Sigmoid colon (tissue), 7 donors: ENCODE measurements at regions of chr3 and their contacts with region 1.

Region 1: GRCh38 chr3:49428697-49429100 is 425 bp downstream of the NICN1 start:
- DNase-seq: no peak
- H3K4me3 ChIP-seq: peak overlapping the region; percentile 51 to 76 (median 64)
- H3K27ac ChIP-seq: peak overlapping the region; percentile 87 to 92 (median 90)
- H3K4me1 ChIP-seq: peaks cover 0 to 14% (median 8%) of the 10 kb centered on the region in 4 donors
- H3K27me3 ChIP-seq: no peaks in the 10 kb centered on the region
- CTCF ChIP-seq: no peak
- EP300 ChIP-seq: no peak
- POLR2A ChIP-seq: no peak

Region 2: GRCh38 chr3:49213541-49213943 is 215.2 kb before region 1 on chr3:
- intact Hi-C with region 1: no loop called
- DNase-seq: no peak
- H3K4me3 ChIP-seq: no peak overlapping the region
- H3K27ac ChIP-seq: no peak overlapping the region
- H3K4me1 ChIP-seq: peaks cover 0 to 17% (median 12%) of the 10 kb centered on the region in 4 donors
- H3K27me3 ChIP-seq: no peaks in the 10 kb centered on the region
- CTCF ChIP-seq: no peak
- EP300 ChIP-seq: no peak
- POLR2A ChIP-seq: no peak

Region 3: DNA sequence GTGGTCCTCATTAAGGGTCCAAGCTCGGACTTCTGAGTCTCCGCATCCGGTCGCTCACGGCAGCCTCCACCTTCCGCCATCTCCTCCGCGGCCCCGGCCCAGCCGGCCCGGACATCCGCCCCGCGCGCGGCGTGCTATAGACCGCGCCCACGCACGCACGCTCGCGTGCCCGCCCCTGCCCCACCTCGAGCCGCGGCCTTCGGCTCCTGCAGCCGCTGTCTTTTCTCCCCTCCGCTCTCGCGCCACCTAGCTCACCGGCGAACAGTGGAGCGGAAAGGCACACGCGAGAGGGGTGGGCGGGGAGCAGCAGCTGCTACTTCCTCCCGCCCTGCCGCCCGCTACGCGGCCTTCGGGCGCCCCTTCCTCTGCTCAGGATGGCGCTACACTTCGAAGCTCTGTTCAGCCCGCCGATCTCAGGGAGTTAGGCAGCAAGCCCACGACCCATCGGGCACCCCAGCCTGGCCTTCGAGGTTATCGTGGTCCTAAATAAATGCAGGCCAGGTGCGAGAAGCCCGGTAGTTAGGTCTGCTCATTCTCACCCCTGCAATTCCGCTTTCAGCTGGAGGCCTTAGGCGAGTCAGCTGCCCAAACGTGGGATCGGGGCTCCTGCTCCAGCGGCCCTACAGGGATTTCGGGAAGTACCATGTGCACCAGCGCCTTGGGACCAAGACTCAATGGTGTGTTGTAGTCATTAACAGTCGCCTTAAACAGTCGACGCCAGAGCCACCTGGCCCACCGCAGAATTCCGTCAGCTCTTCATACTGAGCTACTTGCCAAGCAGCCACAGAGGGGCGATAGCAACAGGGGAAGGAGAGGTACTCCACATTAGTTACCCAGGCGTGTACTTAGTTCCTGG is 88.5 kb before region 1 on chr3 and contains the start of gene USP4:
- intact Hi-C with region 1: loop called (anchors 5 kb)
- DNase-seq: peak; percentile 94
- H3K4me3 ChIP-seq: peak within 1 kb of the TSS; percentile 63 to 89 (median 68)
- H3K27ac ChIP-seq: peak within 1 kb of the TSS; percentile 88 to 95 (median 93)
- H3K4me1 ChIP-seq: peaks cover 0 to 26% (median 21%) of the 10 kb centered on the region in 4 donors
- H3K27me3 ChIP-seq: no peaks in the 10 kb centered on the region
- CTCF ChIP-seq: peak; percentile 6 to 15 (median 13)
- EP300 ChIP-seq: peak in 1 of 4 donors; percentile 2
- POLR2A ChIP-seq: peak in 1 of 2 donors; percentile 45
- total RNA-seq, gene USP4: 16.3 to 28.2 (median 20.5) TPM

Region 4: DNA sequence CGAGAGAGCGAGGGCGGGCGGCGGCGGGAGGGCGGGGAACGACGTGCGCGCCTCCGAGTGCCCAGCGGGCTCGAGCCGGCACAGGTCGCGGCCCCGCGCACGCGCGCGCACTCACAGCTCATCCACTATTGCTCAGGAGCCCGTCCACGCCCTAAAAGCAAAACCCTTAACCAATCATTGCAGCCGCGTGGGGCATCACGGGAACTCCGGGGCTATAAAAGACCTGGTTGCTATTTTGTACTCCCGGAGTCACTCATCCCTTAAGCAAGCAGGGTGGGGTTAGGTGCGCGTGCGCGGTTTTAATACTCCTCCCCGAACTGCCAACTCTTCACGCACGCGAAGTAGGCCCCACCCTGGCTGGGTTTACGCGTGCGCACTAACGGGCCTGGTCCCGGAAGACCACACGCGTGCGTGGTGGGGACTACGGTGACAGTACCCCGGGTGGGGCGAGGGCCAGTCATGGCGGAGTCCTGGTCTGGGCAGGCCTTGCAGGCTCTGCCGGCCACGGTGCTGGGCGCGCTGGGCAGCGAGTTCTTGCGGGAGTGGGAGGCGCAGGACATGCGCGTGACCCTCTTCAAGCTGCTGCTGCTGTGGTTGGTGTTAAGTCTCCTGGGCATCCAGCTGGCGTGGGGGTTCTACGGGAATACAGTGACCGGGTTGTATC is 16.6 kb before region 1 on chr3 and contains the starts of genes RHOA and TCTA:
- intact Hi-C with region 1: loop called (anchors 1 kb)
- DNase-seq: peak; percentile 100
- H3K4me3 ChIP-seq: peak within 1 kb of the TSS; percentile 69 to 95 (median 74)
- H3K27ac ChIP-seq: peak within 1 kb of the TSS; percentile 95 to 99 (median 98)
- H3K4me1 ChIP-seq: peaks cover 0 to 73% (median 50%) of the 10 kb centered on the region in 4 donors
- H3K27me3 ChIP-seq: no peaks in the 10 kb centered on the region
- CTCF ChIP-seq: no peak
- EP300 ChIP-seq: peak in 1 of 4 donors; percentile 80
- POLR2A ChIP-seq: peak; percentile 93 to 96
- total RNA-seq, gene RHOA: 369 to 440 (median 416) TPM
- total RNA-seq, gene TCTA: 15.1 to 25.0 (median 16.5) TPM

Region 5: DNA sequence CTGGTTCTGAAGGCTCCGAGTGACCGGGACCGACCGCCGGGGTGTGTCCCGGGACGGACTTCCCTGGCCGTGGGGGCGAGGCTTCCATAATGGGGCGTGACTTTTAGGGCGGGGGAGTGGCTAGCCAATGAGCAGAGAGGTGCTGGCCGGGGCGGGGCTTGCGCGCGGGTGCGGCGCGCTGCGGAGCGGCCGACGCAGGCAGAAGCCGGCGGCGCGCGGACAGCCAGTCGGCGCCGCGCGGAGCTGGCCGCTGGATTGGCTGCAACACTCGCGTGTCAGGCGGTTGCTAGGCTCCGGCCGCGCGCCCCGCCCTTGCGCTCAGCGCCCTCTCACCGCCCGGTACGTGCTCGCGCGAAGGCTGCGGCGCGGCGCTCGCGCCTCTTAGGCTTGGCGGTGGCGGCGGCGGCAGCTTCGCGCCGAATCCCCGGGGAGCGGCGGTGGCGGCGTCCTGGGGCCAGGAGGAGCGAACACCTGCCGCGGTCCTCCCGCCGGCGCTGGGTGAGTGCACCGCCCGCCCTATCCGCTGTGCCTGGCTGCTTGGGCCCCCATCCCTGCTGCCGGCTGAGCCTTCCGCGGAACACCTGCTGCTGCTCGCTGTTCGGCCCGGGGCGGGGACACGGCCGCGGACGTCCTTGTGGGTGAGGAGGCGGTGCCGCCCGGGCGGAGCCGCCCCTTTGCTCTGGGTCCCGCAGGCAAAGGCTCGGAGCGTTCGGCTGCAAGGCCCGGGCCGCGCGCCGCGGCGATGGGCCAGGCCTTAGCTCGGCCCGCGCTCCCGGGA is 41.4 kb after region 1 on chr3 and contains the start of gene DAG1:
- intact Hi-C with region 1: loop called (anchors 1 kb)
- DNase-seq: peak; percentile 99
- H3K4me3 ChIP-seq: peak within 1 kb of the TSS; percentile 76 to 88 (median 86)
- H3K27ac ChIP-seq: peak within 1 kb of the TSS; percentile 97 to 100 (median 98)
- H3K4me1 ChIP-seq: peaks cover 0 to 44% (median 36%) of the 10 kb centered on the region in 4 donors
- H3K27me3 ChIP-seq: no peaks in the 10 kb centered on the region
- CTCF ChIP-seq: no peak
- EP300 ChIP-seq: no peak
- POLR2A ChIP-seq: peak; percentile 21 to 56
- total RNA-seq, gene DAG1: 42.8 to 73.4 (median 66.5) TPM

Region 6: GRCh38 chr3:49673715-49674496 is 245.2 kb after region 1 on chr3 and contains the start of gene APEH:
- intact Hi-C with region 1: loop called (anchors 5 kb)
- DNase-seq: peak; percentile 98
- H3K4me3 ChIP-seq: peak within 1 kb of the TSS; percentile 83 to 94 (median 90)
- H3K27ac ChIP-seq: peak within 1 kb of the TSS; percentile 87 to 95 (median 88)
- H3K4me1 ChIP-seq: peaks cover 0 to 21% (median 20%) of the 10 kb centered on the region in 4 donors
- H3K27me3 ChIP-seq: peaks cover 0 to 4% (median 1%) of the 10 kb centered on the region in 3 donors
- CTCF ChIP-seq: no peak
- EP300 ChIP-seq: no peak
- POLR2A ChIP-seq: peak; percentile 43 to 76
- total RNA-seq, gene APEH: 49.0 to 64.8 (median 57.7) TPM

Region 7: DNA sequence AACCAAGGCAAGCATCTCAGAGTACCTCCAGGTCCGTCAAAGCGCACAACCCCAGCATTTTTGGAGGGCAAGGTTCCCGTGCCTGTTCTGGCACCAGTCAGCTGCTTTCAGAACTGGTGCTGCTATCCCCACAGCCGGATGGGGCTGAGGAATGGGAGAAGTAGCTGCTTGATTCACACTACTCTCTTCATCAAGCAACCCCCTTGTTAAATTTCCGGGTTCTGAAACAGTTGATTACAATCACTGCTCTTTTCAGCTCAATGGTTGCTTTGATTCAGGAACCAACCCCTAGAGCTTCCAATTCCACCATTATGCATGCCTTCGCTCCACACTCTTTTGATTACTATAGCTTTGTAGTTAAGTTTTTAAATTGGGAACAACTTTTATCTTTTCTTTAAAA is 397.3 kb after region 1 on chr3:
- intact Hi-C with region 1: no loop called
- DNase-seq: no peak
- H3K4me3 ChIP-seq: no peak overlapping the region
- H3K27ac ChIP-seq: no peak overlapping the region
- H3K4me1 ChIP-seq: no peaks in the 10 kb centered on the region
- H3K27me3 ChIP-seq: no peaks in the 10 kb centered on the region
- CTCF ChIP-seq: no peak
- EP300 ChIP-seq: no peak
- POLR2A ChIP-seq: no peak